ENCODE measurements at regions of chr5 and their contacts with region 1.

Region 1: GRCh38 chr5:36269479-36270219 is 27.9 kb upstream of the NADK2 start:
- DNase-seq: no peak
- H3K4me3 ChIP-seq: no peak overlapping the region
- H3K4me3 Mint-ChIP-seq: no peak overlapping the region
- H3K27ac ChIP-seq: no peak overlapping the region
- H3K27ac Mint-ChIP-seq: no peak overlapping the region
- H3K4me1 ChIP-seq: peaks cover 13 to 14% of the 10 kb centered on the region in 2 donors
- H3K4me1 Mint-ChIP-seq: peaks cover 17% of the 10 kb centered on the region
- H3K27me3 ChIP-seq: no peaks in the 10 kb centered on the region
- H3K27me3 Mint-ChIP-seq: peaks cover 0 to 1% (median 0%) of the 10 kb centered on the region in 3 donors
- CTCF ChIP-seq: no peak

Region 2: GRCh38 chr5:36397901-36398536 is 128.4 kb after region 1 on chr5:
- intact Hi-C with region 1: loop called in 1 of 2 experiments (anchors 5 kb)
- DNase-seq: peak in 2 of 3 donors; percentile 30 to 38
- H3K4me3 ChIP-seq: no peak overlapping the region
- H3K4me3 Mint-ChIP-seq: no peak overlapping the region
- H3K27ac ChIP-seq: no peak overlapping the region
- H3K27ac Mint-ChIP-seq: no peak overlapping the region
- H3K4me1 ChIP-seq: peaks cover 0 to under 1% of the 10 kb centered on the region in 2 donors
- H3K4me1 Mint-ChIP-seq: peaks cover 11% of the 10 kb centered on the region
- H3K27me3 ChIP-seq: no peaks in the 10 kb centered on the region
- H3K27me3 Mint-ChIP-seq: peaks cover 0 to under 1% (median 0%) of the 10 kb centered on the region in 3 donors
- CTCF ChIP-seq: no peak